ENCODE measurements at regions of chr15 and their contacts with region 1.

Region 1: GRCh38 chr15:41683955-41684354 is 23.8 kb downstream of the MGA start:
- DNase-seq: no peak
- ATAC-seq: no peak
- H3K4me3 ChIP-seq: no peak overlapping the region
- H3K27ac ChIP-seq: no peak overlapping the region
- H3K4me1 ChIP-seq: peaks cover 0 to 1% of the 10 kb centered on the region in 2 experiments; a peak in 2 of 5 replicates
- H3K27me3 ChIP-seq: no peaks in the 10 kb centered on the region
- CTCF ChIP-seq: no peak
- EP300 ChIP-seq: no peak
- POLR2A ChIP-seq: no peak
- RAD21 ChIP-seq: no peak

Region 2: DNA sequence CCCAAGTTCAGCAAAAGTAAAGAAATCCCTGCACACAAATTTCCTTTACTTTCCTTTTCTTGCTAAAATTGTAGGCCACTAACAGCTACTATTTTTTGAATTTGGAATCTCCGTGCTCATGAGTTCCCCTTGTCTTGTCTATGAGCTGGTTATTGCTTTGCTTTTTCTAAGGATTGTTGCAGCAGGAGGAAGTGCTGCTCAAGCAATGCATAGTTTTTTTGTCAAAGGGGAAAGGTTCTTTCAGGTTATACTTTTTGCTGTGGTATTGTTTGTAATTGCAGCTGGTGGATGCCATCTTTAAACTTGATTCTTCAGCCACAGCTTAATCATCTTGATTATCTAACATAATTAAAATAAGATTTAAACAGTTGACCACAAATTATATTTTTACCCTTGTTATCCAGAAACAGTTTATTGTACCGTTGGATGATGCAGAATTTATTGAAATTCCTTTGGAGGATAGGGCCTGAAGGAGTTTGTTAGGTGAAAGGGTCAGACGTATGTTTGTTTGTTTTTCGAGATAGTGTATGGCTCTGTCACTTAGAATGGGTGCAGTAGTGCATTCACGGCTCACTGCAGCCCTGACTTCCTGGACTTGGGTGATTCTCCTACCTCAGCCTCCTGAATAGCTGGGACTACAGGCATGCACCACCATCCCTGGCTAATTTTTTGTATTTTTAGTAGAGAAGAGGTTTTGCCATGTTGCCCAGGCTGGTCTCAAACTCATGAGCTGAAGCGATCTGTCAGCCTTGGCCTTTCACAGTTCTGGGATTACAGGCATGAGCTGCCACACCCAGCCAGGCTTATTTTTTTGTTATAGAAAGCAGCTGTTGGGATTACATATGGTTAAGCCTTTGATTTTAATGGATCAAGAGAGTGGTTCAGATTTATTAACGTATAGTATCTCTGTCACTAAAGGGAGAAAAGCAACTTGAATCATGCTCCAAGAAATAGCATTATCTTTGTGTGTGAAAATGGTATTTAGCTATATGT is 12.0 kb before region 1 on chr15:
- CTCF ChIA-PET with region 1: no interaction called
- POLR2A ChIA-PET with region 1: interaction called, 17 read pairs
- in situ Hi-C with region 1: no loop called
- intact Hi-C with region 1: no loop called
- DNase-seq: no peak
- ATAC-seq: peak; percentile 81
- H3K4me3 ChIP-seq: no peak overlapping the region
- H3K27ac ChIP-seq: peak overlapping the region; percentile 8; the same call in 1 of the 3 replicates
- H3K4me1 ChIP-seq: peaks cover 5 to 7% of the 10 kb centered on the region in 2 experiments; a peak in 3 of 5 replicates
- H3K27me3 ChIP-seq: no peaks in the 10 kb centered on the region
- CTCF ChIP-seq: no peak
- EP300 ChIP-seq: no peak
- POLR2A ChIP-seq: no peak
- RAD21 ChIP-seq: no peak

Measured in K562 (cell line).